Activated B cell treated with CpG ODN at 0.5 μM for 24 hours (primary cell): ENCODE measurements at regions of chr17 and their contacts with region 1.

Region 1: DNA sequence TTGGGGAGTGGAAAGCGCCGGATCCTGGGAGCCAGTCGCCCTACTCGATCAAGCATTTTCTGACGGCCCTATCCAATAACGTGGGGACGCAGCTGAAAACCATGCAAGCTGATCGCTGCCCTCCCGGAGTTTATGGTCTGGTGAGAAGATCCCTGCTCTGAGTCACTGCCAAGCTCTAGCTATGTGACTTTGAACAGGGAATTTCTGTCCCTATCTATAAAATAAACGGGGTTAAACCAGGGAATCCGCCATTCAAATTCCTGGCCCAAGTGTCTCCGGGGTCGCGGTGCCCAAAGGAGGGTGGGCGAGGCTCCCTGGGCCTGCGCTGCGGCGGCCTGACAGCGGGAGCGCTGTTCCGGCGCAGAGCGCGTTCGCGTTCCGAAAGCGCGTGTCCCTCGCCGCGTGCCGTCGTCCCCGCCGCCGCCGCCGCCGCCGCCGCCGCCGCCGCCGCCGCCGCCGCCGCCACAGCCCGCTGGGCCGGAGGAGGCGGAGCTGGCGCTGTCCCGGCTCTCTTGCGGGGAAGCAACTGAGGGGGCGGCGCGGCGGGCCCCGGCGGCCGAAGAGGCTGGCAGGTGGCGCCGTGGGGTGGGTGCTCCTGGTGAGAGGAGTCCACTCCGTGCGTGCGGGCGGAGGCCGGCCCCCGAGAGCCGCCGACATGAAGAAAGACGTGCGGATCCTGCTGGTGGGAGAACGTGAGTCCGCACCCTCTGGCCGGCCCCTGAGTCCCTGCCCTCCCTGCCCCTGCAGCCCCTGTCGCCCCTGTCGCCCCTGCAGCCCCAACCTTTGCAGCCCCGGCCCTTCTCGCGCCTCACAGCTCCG is at the start of gene RHOT1:
- DNase-seq: peak; percentile 79
- ATAC-seq: peak; percentile 82
- H3K4me3 Mint-ChIP-seq: peak within 1 kb of the TSS; percentile 98
- H3K27ac Mint-ChIP-seq: peak within 1 kb of the TSS; percentile 85
- H3K4me1 Mint-ChIP-seq: peaks cover 23% of the 10 kb centered on the region
- H3K27me3 Mint-ChIP-seq: no peaks in the 10 kb centered on the region
- CTCF ChIP-seq: no peak
- total RNA-seq, gene RHOT1: 14.8 and 16.2 TPM in 2 replicates

Region 2: GRCh38 chr17:30906101-30906911 is 1235.9 kb before region 1 on chr17 and contains the start of gene TEFM:
- CTCF ChIA-PET with region 1: no interaction called
- POLR2A ChIA-PET with region 1: no interaction called
- intact Hi-C with region 1: loop called (anchors 5 kb)
- DNase-seq: peak; percentile 90
- ATAC-seq: peak; percentile 98
- H3K4me3 Mint-ChIP-seq: peak within 1 kb of the TSS; percentile 95
- H3K27ac Mint-ChIP-seq: peak within 1 kb of the TSS; percentile 93
- H3K4me1 Mint-ChIP-seq: peaks cover 42% of the 10 kb centered on the region
- H3K27me3 Mint-ChIP-seq: no peaks in the 10 kb centered on the region
- CTCF ChIP-seq: no peak
- total RNA-seq, gene TEFM: 23.0 and 25.2 TPM in 2 replicates

Region 3: GRCh38 chr17:32006957-32007462 is 135.2 kb before region 1 on chr17 and contains the start of gene LRRC37B:
- CTCF ChIA-PET with region 1: interaction called, 7 read pairs
- POLR2A ChIA-PET with region 1: interaction called, 4 read pairs
- intact Hi-C with region 1: loop called (anchors 1 kb)
- DNase-seq: peak; percentile 92
- ATAC-seq: peak; percentile 94
- H3K4me3 Mint-ChIP-seq: peak within 1 kb of the TSS; percentile 84
- H3K27ac Mint-ChIP-seq: peak within 1 kb of the TSS; percentile 67
- H3K4me1 Mint-ChIP-seq: peaks cover 34% of the 10 kb centered on the region
- H3K27me3 Mint-ChIP-seq: no peaks in the 10 kb centered on the region
- CTCF ChIP-seq: peak; percentile 45
- total RNA-seq, gene LRRC37B: 13.8 and 19.5 TPM in 2 replicates

Region 4: DNA sequence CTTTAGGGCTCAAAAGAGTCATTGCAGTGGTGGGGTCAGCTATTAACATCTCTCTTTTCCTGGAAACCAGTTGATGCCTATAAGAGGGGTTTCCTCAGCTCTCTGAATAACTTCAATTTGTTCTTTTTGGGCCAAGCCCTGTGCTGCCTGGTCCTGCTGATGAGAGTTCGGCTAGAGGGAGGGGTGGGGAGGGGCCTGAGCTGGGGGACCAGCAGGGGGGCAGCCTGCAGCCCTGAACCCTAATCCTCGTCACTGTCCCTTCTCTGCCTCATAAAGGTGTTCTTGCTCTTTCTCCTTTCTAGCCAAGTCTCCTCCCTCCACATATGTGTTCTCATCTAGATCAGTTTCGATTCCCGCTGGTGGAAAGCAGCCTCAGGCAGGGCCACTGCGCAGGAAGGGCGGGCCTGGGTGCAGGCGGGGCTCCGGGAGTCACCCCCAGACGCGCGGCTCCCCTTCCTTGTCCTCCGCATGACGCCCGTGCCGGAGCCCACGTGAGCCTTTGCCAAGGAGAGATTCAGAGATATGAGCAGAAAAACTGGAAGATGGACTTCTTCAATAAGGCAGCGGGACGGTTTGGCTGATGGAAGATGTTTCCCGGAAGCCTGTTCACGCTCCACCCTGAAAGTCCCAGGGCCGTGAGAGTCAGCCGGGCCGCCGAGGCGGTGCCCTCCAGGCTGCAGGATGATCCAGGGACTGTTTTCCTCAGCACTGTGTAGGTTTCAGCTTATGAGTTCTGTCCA is 14.9 kb before region 1 on chr17:
- CTCF ChIA-PET with region 1: interaction called, 12 read pairs
- POLR2A ChIA-PET with region 1: interaction called, 5 read pairs
- intact Hi-C with region 1: loop called (anchors 1 kb)
- DNase-seq: peak; percentile 54
- ATAC-seq: peak; percentile 95
- H3K4me3 Mint-ChIP-seq: peak overlapping the region; percentile 96
- H3K27ac Mint-ChIP-seq: peak overlapping the region; percentile 95
- H3K4me1 Mint-ChIP-seq: peaks cover 21% of the 10 kb centered on the region
- H3K27me3 Mint-ChIP-seq: no peaks in the 10 kb centered on the region
- CTCF ChIP-seq: no peak